Activated CD4-positive, alpha-beta memory T cell treated with anti-CD3 and anti-CD28 coated beads for 36 hours (primary cell): ENCODE measurements at regions of chr19 and their contacts with region 1.

Region 1: GRCh38 chr19:10797541-10798256 is 38.3 kb downstream of the TMED1 start:
- DNase-seq: peak; percentile 98
- H3K4me3 Mint-ChIP-seq: peak overlapping the region; percentile 76
- H3K27ac Mint-ChIP-seq: peak overlapping the region; percentile 99
- H3K4me1 Mint-ChIP-seq: peaks cover 32% of the 10 kb centered on the region
- H3K27me3 Mint-ChIP-seq: no peaks in the 10 kb centered on the region

Region 2: DNA sequence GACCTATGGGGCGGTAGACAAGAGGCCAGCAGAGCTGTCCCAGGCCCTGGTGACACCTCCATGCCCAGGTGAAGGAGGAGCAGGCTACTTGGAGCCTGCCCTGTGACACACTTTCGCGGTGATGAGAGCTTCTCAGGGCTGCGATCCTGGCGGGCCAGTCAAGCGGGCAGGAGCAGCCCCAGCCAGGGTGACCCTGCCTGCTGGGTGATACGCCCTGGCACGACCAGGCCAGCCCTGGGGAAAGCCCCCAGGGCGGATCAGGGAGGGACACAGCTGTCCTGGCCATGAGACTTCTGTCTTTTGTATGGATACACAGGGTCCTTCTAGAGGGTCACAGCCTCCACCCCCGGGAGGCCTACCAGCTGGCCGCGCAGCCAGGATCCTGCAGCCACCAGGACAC is 66.8 kb before region 1 on chr19:
- CTCF ChIA-PET with region 1: no interaction called
- POLR2A ChIA-PET with region 1: no interaction called
- intact Hi-C with region 1: loop called (anchors 1 kb)
- DNase-seq: no peak
- H3K4me3 Mint-ChIP-seq: peak overlapping the region; percentile 26
- H3K27ac Mint-ChIP-seq: peak overlapping the region; percentile 84
- H3K4me1 Mint-ChIP-seq: peaks cover 50% of the 10 kb centered on the region
- H3K27me3 Mint-ChIP-seq: no peaks in the 10 kb centered on the region

Region 3: GRCh38 chr19:10812902-10813404 is 15.3 kb after region 1 on chr19:
- CTCF ChIA-PET with region 1: interaction called, 3 read pairs
- POLR2A ChIA-PET with region 1: interaction called, 4 read pairs
- intact Hi-C with region 1: loop called (anchors 1 kb)
- DNase-seq: peak; percentile 76
- H3K4me3 Mint-ChIP-seq: no peak overlapping the region
- H3K27ac Mint-ChIP-seq: peak overlapping the region; percentile 90
- H3K4me1 Mint-ChIP-seq: peaks cover 30% of the 10 kb centered on the region
- H3K27me3 Mint-ChIP-seq: no peaks in the 10 kb centered on the region

Region 4: GRCh38 chr19:10864538-10864899 is 66.8 kb after region 1 on chr19:
- CTCF ChIA-PET with region 1: interaction called, 10 read pairs
- POLR2A ChIA-PET with region 1: no interaction called
- intact Hi-C with region 1: no loop called
- DNase-seq: peak; percentile 91
- H3K4me3 Mint-ChIP-seq: no peak overlapping the region
- H3K27ac Mint-ChIP-seq: no peak overlapping the region
- H3K4me1 Mint-ChIP-seq: peaks cover 13% of the 10 kb centered on the region
- H3K27me3 Mint-ChIP-seq: no peaks in the 10 kb centered on the region

Region 5: DNA sequence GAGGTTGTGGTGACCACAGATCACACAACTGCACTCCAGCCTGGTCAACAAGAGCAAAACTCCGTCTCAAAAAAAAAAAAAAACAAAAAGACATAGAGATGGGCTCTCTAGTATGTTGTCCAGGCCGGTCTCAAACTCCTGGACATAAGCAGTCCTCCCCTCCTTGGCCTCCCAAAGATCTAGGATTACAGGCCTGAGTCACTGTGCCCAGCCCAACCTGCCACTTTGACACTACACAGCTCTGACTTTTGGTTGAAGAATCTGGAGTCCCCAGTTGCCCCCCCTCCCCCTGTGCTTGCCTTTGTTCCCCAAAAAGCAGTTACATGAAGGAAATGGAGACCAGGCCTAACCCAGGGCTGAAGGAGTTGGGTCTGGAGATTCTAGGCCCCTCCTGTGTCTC is 86.6 kb after region 1 on chr19:
- CTCF ChIA-PET with region 1: no interaction called
- POLR2A ChIA-PET with region 1: no interaction called
- intact Hi-C with region 1: no loop called
- DNase-seq: no peak
- H3K4me3 Mint-ChIP-seq: no peak overlapping the region
- H3K27ac Mint-ChIP-seq: no peak overlapping the region
- H3K4me1 Mint-ChIP-seq: peaks cover 6% of the 10 kb centered on the region
- H3K27me3 Mint-ChIP-seq: no peaks in the 10 kb centered on the region

Region 6: DNA sequence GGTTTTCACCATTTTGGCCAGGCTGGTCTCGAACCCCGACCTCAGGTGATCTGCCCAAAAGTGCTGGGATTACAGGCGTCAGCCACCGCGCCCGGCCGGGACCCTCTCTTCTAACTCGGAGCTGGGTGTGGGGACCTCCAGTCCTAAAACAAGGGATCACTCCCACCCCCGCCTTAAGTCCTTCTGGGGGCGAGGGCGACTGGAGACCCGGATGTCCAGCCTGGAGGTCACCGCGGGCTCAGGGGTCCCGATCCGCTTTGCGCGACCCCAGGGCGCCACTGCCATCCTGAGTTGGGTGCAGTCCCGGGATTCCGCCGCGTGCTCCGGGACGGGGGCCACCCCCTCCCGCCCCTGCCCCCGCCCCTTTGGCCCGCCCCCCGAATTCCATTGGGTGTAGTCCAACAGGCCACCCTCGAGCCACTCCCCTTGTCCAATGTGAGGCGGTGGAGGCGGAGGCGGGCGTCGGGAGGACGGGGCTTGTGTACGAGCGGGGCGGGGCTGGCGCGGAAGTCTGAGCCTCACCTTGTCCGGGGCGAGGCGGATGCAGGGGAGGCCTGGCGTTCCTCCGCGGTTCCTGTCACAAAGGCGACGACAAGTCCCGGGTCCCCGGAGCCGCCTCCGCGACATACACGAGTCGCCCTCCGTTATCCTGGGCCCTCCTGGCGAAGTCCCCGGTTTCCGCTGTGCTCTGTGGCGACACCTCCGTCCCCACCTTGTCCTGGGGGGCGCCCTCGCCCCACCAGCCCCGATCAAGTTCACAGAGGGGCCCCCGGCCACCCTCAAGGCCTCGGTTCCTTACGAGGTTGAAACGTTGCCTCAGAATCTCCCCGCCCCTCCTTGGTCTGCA is 292.6 kb after region 1 on chr19:
- CTCF ChIA-PET with region 1: no interaction called
- POLR2A ChIA-PET with region 1: no interaction called
- intact Hi-C with region 1: loop called (anchors 10 kb)
- DNase-seq: peak; percentile 99
- H3K4me3 Mint-ChIP-seq: peak overlapping the region; percentile 95
- H3K27ac Mint-ChIP-seq: peak overlapping the region; percentile 98
- H3K4me1 Mint-ChIP-seq: peaks cover 45% of the 10 kb centered on the region
- H3K27me3 Mint-ChIP-seq: no peaks in the 10 kb centered on the region